ENCODE measurements at regions of chr1 and their contacts with region 1.

Region 1: DNA sequence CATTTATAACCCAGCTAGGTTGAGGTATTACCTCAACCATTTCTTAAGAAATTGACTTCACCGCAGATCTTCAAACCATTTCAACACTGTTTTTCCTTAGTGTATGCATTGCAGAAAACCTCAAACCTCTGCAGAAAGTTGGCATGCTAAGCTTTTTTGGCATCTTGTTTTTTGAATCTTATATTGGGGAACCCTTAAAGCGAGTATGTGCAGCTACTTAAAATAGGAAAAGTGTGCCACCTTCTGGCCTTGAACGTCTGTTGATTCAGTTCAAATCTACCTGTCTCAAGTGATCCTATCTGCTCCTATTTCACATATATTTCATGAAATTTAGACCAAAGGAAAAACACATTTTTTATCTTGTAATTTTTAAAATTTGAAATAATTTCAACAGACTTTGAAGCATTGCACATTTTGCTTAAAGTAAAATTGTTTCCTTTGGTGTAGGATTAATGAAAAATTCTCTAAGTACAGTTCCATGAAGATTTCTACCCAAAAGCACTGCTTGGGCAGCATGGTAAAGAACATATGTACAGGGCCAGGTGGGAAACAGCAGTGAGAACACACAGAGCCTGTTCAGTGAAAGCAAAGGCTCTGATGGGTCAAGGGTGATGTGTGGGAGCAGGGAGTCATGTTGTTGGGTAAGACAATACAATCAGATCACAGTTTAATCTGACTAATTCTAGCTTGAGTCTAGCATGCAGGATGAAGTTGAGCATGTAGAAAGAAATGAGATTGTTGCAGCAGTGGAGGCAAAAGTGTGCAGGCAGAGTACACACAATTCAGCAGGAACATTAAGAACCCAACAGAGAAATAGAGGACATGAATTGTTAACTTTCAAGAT is 17.2 kb downstream of the HENMT1 start:
- DNase-seq: peak; percentile 19
- H3K4me3 ChIP-seq: no peak overlapping the region
- H3K27me3 ChIP-seq: no peaks in the 10 kb centered on the region
- CTCF ChIP-seq: peak; percentile 55

Region 2: GRCh38 chr1:108512239-108512981 is 131.3 kb before region 1 on chr1:
- CTCF ChIA-PET with region 1: interaction called, 149 read pairs
- POLR2A ChIA-PET with region 1: no interaction called
- DNase-seq: no peak
- H3K4me3 ChIP-seq: no peak overlapping the region
- H3K27me3 ChIP-seq: no peaks in the 10 kb centered on the region
- CTCF ChIP-seq: peak; percentile 77

Region 3: GRCh38 chr1:108521990-108522393 is 121.7 kb before region 1 on chr1:
- CTCF ChIA-PET with region 1: interaction called, 13 read pairs
- POLR2A ChIA-PET with region 1: no interaction called
- DNase-seq: no peak
- H3K4me3 ChIP-seq: no peak overlapping the region
- H3K27me3 ChIP-seq: peaks cover 4% of the 10 kb centered on the region
- CTCF ChIP-seq: no peak

Region 4: GRCh38 chr1:108570128-108570527 is 73.6 kb before region 1 on chr1:
- CTCF ChIA-PET with region 1: interaction called, 12 read pairs
- POLR2A ChIA-PET with region 1: no interaction called
- DNase-seq: no peak
- H3K4me3 ChIP-seq: no peak overlapping the region
- H3K27me3 ChIP-seq: no peaks in the 10 kb centered on the region
- CTCF ChIP-seq: peak; percentile 33

Measured in BJ (cell line).